ENCODE measurements at regions of chr7 and their contacts with region 1.

Region 1: GRCh38 chr7:44257618-44258422 is 57.0 kb downstream of the YKT6 start:
- DNase-seq: peak; percentile 89
- ATAC-seq: peak; percentile 93
- H3K4me3 Mint-ChIP-seq: peak overlapping the region; percentile 1
- H3K27ac Mint-ChIP-seq: peak overlapping the region; percentile 91
- H3K4me1 Mint-ChIP-seq: peaks cover 28% of the 10 kb centered on the region
- H3K27me3 Mint-ChIP-seq: no peaks in the 10 kb centered on the region

Region 2: DNA sequence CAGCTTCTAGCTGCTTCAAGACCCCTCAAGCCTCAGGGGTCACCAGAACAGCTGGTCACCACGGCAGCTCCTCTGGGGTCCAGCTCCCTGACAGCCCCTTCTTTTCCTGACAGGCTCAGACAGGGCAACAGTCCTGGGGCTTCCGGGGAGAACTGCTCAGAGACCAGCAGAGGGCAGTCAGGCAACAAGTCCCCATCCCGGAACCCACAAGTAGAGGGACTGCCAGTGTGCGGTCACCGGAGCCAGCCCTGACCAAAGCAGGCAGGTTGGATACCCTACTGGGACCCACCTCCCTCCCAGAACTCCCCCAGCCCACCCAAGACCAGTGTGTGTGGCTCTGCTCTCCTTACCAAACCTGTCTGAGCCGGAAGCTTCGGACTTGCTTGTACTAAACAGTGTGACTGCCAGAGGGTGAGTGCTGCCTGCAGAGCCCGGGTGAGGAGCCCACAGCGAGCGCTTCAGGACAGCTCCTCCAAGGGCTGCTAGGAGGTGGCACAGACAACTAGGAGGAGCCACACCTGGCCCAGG is 16.8 kb before region 1 on chr7:
- CTCF ChIA-PET with region 1: interaction called, 15 read pairs
- DNase-seq: peak; percentile 75
- ATAC-seq: peak; percentile 90
- H3K4me3 Mint-ChIP-seq: no peak overlapping the region
- H3K27ac Mint-ChIP-seq: no peak overlapping the region
- H3K4me1 Mint-ChIP-seq: peaks cover 2% of the 10 kb centered on the region
- H3K27me3 Mint-ChIP-seq: no peaks in the 10 kb centered on the region

Region 3: GRCh38 chr7:44320794-44321371 is 63.1 kb after region 1 on chr7:
- CTCF ChIA-PET with region 1: no interaction called
- DNase-seq: no peak
- ATAC-seq: no peak
- H3K4me3 Mint-ChIP-seq: no peak overlapping the region
- H3K27ac Mint-ChIP-seq: no peak overlapping the region
- H3K4me1 Mint-ChIP-seq: peaks cover 3% of the 10 kb centered on the region
- H3K27me3 Mint-ChIP-seq: peaks cover 42% of the 10 kb centered on the region